Left ventricle myocardium superior (tissue), 1 donor: ENCODE measurements at regions of chr10 and their contacts with region 1.

Region 1: GRCh38 chr10:28381903-28382347 is 79.1 kb upstream of the MPP7 start:
- DNase-seq: peak; percentile 68
- ATAC-seq: peak; percentile 85

Region 2: DNA sequence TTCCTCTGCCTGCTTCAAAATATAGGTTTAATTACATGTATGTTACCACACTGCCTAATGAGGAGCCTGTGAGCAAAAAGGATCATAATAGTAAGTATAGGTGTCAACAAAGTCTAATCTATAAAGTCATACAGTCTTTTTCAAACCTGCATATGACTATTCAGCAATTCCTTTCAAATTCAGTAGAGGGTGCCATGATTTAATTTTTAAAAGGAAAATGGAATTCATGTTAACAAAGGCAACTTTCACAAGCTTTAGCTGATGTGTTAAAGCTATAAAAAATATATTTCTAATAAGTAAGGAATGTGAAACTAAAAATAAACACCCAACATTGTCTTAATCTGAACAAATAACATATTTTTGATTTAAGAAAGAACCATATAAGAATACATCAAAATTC is 131.1 kb before region 1 on chr10:
- intact Hi-C with region 1: loop called (anchors 2 kb)
- DNase-seq: no peak
- ATAC-seq: peak; percentile 38

Region 3: GRCh38 chr10:28302638-28303488 is 79.1 kb before region 1 on chr10 and contains the start of gene MPP7:
- intact Hi-C with region 1: loop called (anchors 5 kb)
- DNase-seq: peak; percentile 96
- ATAC-seq: peak; percentile 98
- total RNA-seq, gene MPP7: 15.3 TPM